ENCODE measurements at regions of chr2 and their contacts with region 1.

Region 1: GRCh38 chr2:171160119-171160955 is at the start of gene TLK1:
- DNase-seq: peak; percentile 86
- ATAC-seq: peak; percentile 78
- total RNA-seq, gene TLK1: 26.7 TPM

Region 2: GRCh38 chr2:170928824-170929685 is 231.3 kb before region 1 on chr2 and contains the start of gene GORASP2:
- intact Hi-C with region 1: loop called (anchors 1 kb)
- DNase-seq: peak; percentile 99
- ATAC-seq: peak; percentile 98
- total RNA-seq, gene GORASP2: 57.1 TPM

Region 3: GRCh38 chr2:170973492-170974303 is 186.6 kb before region 1 on chr2:
- intact Hi-C with region 1: loop called (anchors 1 kb)
- DNase-seq: peak; percentile 91
- ATAC-seq: peak; percentile 96

Region 4: DNA sequence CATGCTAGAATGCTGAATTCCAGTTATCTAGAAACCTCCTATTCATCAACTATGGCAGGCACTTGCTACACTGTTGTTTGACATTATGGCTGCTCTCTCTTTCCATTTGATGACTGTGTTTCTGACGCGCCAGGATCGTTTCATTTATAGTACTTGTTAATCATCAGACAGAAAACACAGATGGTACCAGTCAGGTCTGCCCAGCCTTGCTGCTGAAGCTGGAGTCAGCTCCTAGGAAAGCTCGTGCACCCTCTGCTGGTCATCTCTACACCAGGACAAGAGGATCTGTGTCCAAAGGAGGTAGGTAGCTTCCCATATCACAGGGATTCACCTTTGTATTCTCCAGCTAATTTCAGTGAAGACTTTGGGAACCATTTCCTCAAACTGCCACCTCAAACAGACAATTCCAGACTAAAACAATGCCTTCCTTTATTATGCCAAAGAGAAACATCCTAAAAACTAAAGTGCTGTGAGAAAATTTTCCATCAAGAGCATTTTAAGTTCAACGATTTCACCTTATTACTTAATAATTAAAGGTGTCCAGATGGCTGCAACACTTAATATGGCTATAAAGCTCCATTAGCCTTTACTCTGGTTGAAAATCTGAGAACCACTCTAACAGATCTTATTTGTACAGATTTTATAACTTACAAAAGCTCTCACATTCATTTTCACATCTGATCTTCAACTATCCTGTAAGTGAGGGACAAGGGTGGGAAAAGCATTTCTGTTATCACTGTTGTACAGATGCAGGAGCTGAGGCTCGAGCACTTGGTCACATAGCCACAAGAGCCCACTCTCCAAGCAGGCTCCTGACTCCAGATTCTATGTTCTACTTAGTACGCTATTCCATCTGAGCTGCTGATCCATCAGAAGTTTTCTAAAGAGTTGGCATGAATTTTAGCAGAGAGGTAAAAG is 255.9 kb after region 1 on chr2:
- intact Hi-C with region 1: loop called (anchors 5 kb)
- DNase-seq: peak; percentile 81
- ATAC-seq: peak; percentile 98

Measured in Right ventricle myocardium inferior (tissue), 1 donor.